Activated CD4-positive, alpha-beta memory T cell treated with anti-CD3 and anti-CD28 coated beads for 36 hours (primary cell): ENCODE measurements at regions of chr9 and their contacts with region 1.

Region 1: GRCh38 chr9:76562511-76562911 is 103.5 kb downstream of the GCNT1 start:
- DNase-seq: no peak
- H3K4me3 Mint-ChIP-seq: no peak overlapping the region
- H3K27ac Mint-ChIP-seq: peak overlapping the region; percentile 61
- H3K4me1 Mint-ChIP-seq: peaks cover 22% of the 10 kb centered on the region
- H3K27me3 Mint-ChIP-seq: peaks cover 1% of the 10 kb centered on the region

Region 2: GRCh38 chr9:76458903-76459690 is 103.4 kb before region 1 on chr9 and contains the start of gene GCNT1:
- CTCF ChIA-PET with region 1: no interaction called
- POLR2A ChIA-PET with region 1: no interaction called
- intact Hi-C with region 1: loop called (anchors 5 kb)
- DNase-seq: peak; percentile 94
- H3K4me3 Mint-ChIP-seq: peak within 1 kb of the TSS; percentile 94
- H3K27ac Mint-ChIP-seq: peak within 1 kb of the TSS; percentile 49
- H3K4me1 Mint-ChIP-seq: peaks cover 18% of the 10 kb centered on the region
- H3K27me3 Mint-ChIP-seq: no peaks in the 10 kb centered on the region
- total RNA-seq, gene GCNT1: 6.7 to 6.9 TPM

Region 3: GRCh38 chr9:76576344-76576743 is 13.8 kb after region 1 on chr9:
- CTCF ChIA-PET with region 1: interaction called, 3 read pairs
- POLR2A ChIA-PET with region 1: interaction called, 6 read pairs
- intact Hi-C with region 1: loop called (anchors 1 kb)
- DNase-seq: peak; percentile 84
- H3K4me3 Mint-ChIP-seq: no peak overlapping the region
- H3K27ac Mint-ChIP-seq: peak overlapping the region; percentile 46
- H3K4me1 Mint-ChIP-seq: peaks cover 19% of the 10 kb centered on the region
- H3K27me3 Mint-ChIP-seq: peaks cover 30% of the 10 kb centered on the region

Region 4: DNA sequence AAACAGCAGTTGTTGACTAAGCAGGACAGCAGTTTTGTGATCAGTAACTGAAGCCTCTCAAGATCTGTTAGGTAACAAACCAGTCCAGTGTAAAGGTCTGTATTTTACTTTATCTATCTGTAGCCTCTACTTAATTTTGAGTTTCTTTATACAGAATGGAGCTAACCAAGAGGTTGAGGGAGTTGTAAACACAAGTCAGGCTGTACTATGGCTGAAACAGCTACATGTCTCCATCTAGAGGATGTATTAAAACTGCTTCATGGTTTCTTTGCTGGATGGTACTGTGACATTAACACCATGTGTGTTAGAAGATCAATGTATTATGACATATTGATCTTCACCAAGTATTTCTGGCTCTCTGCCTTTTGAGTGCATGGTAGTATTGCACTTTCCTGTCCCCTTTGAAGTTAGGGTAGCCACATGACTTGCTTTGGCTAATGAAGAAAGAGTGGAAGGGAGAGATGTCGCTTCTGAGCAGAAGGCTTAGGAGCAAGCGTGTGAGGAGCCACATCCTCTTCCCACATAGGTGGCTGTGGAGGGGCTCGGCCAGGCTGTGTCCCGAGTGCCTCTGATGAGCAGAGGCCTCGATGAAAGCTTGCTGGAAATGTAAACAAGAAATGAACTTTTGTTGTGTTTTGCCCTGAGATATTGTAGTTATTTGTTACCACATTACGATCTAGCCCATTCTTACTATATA is 96.2 kb after region 1 on chr9:
- CTCF ChIA-PET with region 1: interaction called, 3 read pairs
- POLR2A ChIA-PET with region 1: no interaction called
- intact Hi-C with region 1: loop called (anchors 2 kb)
- DNase-seq: no peak
- H3K4me3 Mint-ChIP-seq: no peak overlapping the region
- H3K27ac Mint-ChIP-seq: no peak overlapping the region
- H3K4me1 Mint-ChIP-seq: peaks cover 29% of the 10 kb centered on the region
- H3K27me3 Mint-ChIP-seq: peaks cover 1% of the 10 kb centered on the region

Region 5: DNA sequence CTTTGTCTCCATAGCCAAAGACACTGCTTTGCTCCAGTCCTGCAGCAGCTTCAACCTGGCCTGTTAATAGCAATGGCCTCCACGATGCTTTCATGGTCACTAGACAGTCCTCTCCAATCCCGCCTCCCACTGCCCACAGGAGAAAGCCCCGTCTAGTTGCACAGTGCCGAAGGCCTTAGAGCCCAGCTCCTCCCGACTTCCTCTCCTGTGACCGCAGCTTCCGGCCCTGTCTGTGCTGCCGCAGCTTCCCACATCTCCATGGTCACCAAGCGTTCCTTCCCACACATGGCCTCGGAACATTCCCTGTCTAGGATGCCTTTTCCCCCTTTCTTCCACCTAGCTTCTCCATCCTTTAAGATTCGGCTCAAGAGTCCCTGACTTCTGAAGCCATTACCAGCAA is 225.2 kb after region 1 on chr9:
- CTCF ChIA-PET with region 1: no interaction called
- POLR2A ChIA-PET with region 1: no interaction called
- intact Hi-C with region 1: no loop called
- DNase-seq: no peak
- H3K4me3 Mint-ChIP-seq: no peak overlapping the region
- H3K27ac Mint-ChIP-seq: no peak overlapping the region
- H3K4me1 Mint-ChIP-seq: no peaks in the 10 kb centered on the region
- H3K27me3 Mint-ChIP-seq: peaks cover 12% of the 10 kb centered on the region

Region 6: DNA sequence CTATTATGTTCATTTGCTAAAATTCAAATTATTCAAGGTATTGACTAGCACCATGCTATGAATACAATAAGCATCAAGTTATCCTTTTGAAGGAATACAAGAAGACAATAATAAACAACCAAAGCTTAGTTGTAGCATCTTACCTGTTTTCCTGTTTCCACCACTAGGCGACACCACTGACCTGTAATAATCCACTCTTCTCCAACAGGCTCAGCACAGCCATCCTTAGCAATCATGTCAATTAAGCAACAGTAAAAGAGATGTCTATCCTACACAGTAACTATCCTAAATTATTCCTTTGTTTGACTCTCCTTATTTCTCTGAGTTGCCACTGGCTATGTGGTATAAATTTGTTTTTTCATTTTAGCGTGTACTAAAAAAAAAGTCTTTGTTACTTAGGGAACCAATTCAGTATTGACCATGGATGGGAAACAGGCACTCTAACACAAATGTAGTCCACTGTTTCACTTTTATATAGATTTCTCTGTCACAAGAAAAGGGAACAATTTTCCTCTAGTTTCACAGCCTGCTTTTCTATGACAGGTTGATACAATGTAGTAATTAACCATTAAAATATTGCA is 248.0 kb after region 1 on chr9:
- CTCF ChIA-PET with region 1: no interaction called
- POLR2A ChIA-PET with region 1: no interaction called
- intact Hi-C with region 1: no loop called
- DNase-seq: peak; percentile 29
- H3K4me3 Mint-ChIP-seq: no peak overlapping the region
- H3K27ac Mint-ChIP-seq: no peak overlapping the region
- H3K4me1 Mint-ChIP-seq: no peaks in the 10 kb centered on the region
- H3K27me3 Mint-ChIP-seq: peaks cover 17% of the 10 kb centered on the region